Endothelial cell of umbilical vein (primary cell): ENCODE measurements at regions of chr10 and their contacts with region 1.

Region 1: GRCh38 chr10:132836832-132837540 is 51.0 kb upstream of the NKX6-2 start:
- DNase-seq: peak; percentile 18
- H3K4me3 ChIP-seq: no peak overlapping the region
- H3K27ac ChIP-seq: no peak overlapping the region
- H3K4me1 ChIP-seq: no peaks in the 10 kb centered on the region
- H3K27me3 ChIP-seq: no peaks in the 10 kb centered on the region
- CTCF ChIP-seq: peak; percentile 78 to 88
- POLR2A ChIP-seq: no peak

Region 2: GRCh38 chr10:132808383-132809231 is 28.4 kb before region 1 on chr10:
- CTCF ChIA-PET with region 1: no interaction called
- POLR2A ChIA-PET with region 1: no interaction called
- dilution Hi-C with region 1: no loop called
- intact Hi-C with region 1: no loop called
- DNase-seq: no peak
- H3K4me3 ChIP-seq: no peak overlapping the region
- H3K27ac ChIP-seq: no peak overlapping the region
- H3K4me1 ChIP-seq: no peaks in the 10 kb centered on the region
- H3K27me3 ChIP-seq: no peaks in the 10 kb centered on the region
- CTCF ChIP-seq: no peak
- POLR2A ChIP-seq: no peak

Region 3: DNA sequence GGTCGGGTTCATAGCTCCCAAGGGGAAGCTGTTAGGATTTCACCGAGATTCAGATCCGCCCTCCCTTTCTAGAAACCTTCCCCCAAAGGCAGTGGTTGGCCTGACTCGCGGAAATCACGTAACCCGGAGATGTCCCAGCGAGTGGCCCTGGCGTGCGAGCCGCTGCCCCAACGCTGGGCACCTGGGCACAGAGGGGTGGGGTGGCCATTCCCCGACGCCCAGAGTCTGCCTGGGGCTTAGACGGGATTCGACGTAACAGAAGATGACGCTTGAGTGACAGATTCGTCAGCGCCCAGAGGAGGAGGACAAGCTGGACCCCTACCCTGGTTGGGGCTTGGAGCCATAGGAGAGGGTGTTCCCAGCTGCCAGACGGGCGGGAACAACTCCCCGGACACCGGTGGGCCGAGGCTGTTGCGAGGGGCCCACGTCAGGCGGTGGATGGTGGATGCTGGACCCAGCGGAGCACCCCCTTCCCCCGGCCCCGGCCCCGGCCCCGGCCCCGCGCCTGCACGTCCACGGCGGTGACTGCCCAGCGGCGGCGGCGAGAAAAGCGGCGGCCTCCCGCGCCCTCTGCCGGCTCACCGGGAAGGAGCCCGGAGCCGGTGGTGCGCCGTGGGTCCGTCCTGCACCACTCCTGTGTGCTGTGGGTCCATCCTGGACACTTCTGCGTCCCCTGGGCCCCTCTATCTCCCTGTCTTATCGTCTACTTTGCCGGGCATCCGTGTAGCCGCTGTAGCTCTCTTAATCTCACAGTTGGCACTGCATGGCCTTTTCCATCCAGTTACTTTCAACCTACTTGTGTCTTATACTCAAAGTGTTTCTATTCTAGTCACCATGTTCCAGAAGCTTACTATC is 287.6 kb after region 1 on chr10:
- CTCF ChIA-PET with region 1: no interaction called
- POLR2A ChIA-PET with region 1: no interaction called
- dilution Hi-C with region 1: no loop called
- intact Hi-C with region 1: loop called (anchors 2 kb)
- DNase-seq: peak; percentile 9
- H3K4me3 ChIP-seq: no peak overlapping the region
- H3K27ac ChIP-seq: no peak overlapping the region
- H3K4me1 ChIP-seq: no peaks in the 10 kb centered on the region
- H3K27me3 ChIP-seq: no peaks in the 10 kb centered on the region
- CTCF ChIP-seq: peak; percentile 19 to 65
- POLR2A ChIP-seq: no peak